ENCODE measurements at regions of chr12 and their contacts with region 1.

Region 1: DNA sequence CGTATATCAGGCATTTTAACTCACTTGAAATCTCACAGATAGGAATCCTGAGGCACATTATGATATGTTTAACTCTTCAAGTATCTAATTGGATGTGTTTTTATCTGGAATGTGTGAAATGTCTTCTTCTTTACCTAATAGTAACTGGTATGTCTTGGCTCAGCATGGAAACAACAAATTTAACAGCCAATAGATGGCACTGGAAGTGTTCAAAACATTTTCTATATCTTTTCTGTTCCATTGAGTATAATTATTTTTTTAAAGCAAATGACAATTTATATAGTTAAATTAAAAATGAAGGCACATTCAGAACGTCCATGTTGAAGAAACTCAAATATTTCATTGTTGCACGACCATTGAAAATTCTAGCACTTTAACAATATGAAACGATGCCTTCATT is 164.6 kb upstream of the SLC16A7 start:
- DNase-seq: peak; percentile 39
- H3K4me3 ChIP-seq: no peak overlapping the region
- H3K27ac ChIP-seq: no peak overlapping the region
- H3K4me1 ChIP-seq: 0 out of 2 replicates have a peak, but pooled peaks cover 6% of the 10 kb centered on the region
- H3K27me3 ChIP-seq: no peaks in the 10 kb centered on the region

Region 2: GRCh38 chr12:59808317-59808910 is 377.1 kb after region 1 on chr12:
- in situ Hi-C with region 1: loop called (anchors 25 kb)
- DNase-seq: peak; percentile 71
- H3K4me3 ChIP-seq: no peak overlapping the region
- H3K27ac ChIP-seq: no peak overlapping the region
- H3K4me1 ChIP-seq: no peaks in the 10 kb centered on the region
- H3K27me3 ChIP-seq: no peaks in the 10 kb centered on the region

Region 3: GRCh38 chr12:60494244-60494643 is 1063.0 kb after region 1 on chr12:
- in situ Hi-C with region 1: loop called (anchors 25 kb)
- DNase-seq: peak; percentile 66
- H3K4me3 ChIP-seq: no peak overlapping the region
- H3K27ac ChIP-seq: no peak overlapping the region
- H3K4me1 ChIP-seq: peaks cover 8% of the 10 kb centered on the region; the same call in 1 of the 2 replicates
- H3K27me3 ChIP-seq: no peaks in the 10 kb centered on the region